CD8-positive, alpha-beta memory T cell (primary cell): ENCODE measurements at regions of chr7 and their contacts with region 1.

Region 1: DNA sequence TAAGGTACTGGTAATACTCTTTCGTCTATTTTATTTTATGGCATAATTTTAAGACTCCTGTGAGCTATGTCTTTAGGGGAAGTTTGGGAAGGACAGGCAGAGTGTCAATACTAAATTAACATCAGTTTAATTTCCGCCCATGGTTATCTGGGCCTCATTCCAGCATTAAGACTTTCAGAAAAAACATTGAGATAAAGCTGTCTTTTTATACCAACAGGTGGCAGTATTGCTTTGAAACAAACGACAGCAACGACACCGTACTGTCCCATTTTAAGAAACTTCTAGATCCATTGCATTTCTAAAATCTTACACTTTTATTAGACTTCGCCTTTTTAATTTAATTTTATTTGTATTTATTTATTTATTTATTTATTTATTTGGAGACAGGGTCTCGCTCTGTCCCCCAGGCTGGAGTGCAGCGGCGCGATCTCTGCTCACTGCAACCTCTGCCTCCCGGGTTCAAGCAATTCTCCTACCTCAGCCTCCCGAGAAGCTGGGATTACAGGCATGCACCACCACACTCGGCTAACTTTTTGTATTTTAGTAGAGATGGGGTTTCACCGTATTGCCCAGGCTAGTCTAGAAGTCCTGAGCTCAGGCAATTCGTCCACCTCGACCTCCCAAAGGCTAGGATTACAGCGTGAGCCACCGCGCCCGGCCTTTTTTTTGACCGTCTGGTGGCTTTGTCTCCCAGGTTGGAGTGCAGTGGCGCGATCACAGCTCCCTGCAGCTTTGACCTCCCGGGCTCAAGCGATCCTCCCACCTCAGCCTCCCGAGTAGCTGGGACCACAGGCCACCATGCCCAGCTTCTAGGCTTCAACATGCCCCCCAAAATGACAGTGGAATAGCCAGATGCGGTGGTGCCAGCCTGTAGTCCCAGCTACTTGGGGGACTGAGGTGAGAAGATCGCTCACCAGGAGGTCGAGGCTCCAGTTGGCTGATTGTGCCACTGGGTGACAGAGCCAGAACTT is 78.7 kb upstream of the C1GALT1 start:
- DNase-seq: peak in 2 of 5 donors; percentile 48 to 58
- H3K4me3 ChIP-seq: no peak overlapping the region
- H3K4me3 Mint-ChIP-seq: no peak overlapping the region
- H3K27ac ChIP-seq: peak overlapping the region; percentile 47
- H3K27ac Mint-ChIP-seq: peak overlapping the region in 2 of 8 donors; percentile 27 to 29
- H3K4me1 ChIP-seq: peaks cover 11% of the 10 kb centered on the region
- H3K4me1 Mint-ChIP-seq: peaks cover 5 to 21% (median 19%) of the 10 kb centered on the region in 3 donors
- H3K27me3 ChIP-seq: no peaks in the 10 kb centered on the region
- H3K27me3 Mint-ChIP-seq: no peaks in the 10 kb centered on the region

Region 2: DNA sequence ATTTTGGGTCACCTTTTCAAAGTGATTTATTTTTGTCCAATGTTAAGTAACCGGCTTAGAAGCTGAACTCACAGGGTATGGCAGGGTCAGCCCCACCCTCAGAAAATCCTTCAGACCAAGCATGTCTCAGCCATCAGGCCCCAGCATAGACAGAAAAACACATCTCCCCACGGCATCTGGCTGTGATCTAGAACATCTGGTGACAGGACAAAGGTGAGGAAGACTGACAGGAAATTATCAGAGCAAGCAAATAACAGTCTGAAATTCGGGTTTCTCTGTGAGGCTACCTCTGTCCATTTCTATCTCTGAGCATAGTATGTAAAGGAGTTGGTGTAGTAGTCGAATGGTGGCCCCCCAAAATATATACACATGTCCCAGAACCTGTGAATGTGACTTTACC is 98.3 kb before region 1 on chr7:
- CTCF ChIA-PET with region 1: no interaction called
- POLR2A ChIA-PET with region 1: no interaction called
- DNase-seq: no peak
- H3K4me3 ChIP-seq: no peak overlapping the region
- H3K4me3 Mint-ChIP-seq: no peak overlapping the region
- H3K27ac ChIP-seq: no peak overlapping the region
- H3K27ac Mint-ChIP-seq: no peak overlapping the region
- H3K4me1 ChIP-seq: no peaks in the 10 kb centered on the region
- H3K4me1 Mint-ChIP-seq: no peaks in the 10 kb centered on the region
- H3K27me3 ChIP-seq: no peaks in the 10 kb centered on the region
- H3K27me3 Mint-ChIP-seq: peaks cover 22 to 46% of the 10 kb centered on the region in 2 donors

Region 3: GRCh38 chr7:7032210-7032609 is 71.4 kb before region 1 on chr7:
- CTCF ChIA-PET with region 1: no interaction called
- POLR2A ChIA-PET with region 1: no interaction called
- DNase-seq: no peak
- H3K4me3 ChIP-seq: no peak overlapping the region
- H3K4me3 Mint-ChIP-seq: no peak overlapping the region
- H3K27ac ChIP-seq: no peak overlapping the region
- H3K27ac Mint-ChIP-seq: no peak overlapping the region
- H3K4me1 ChIP-seq: no peaks in the 10 kb centered on the region
- H3K4me1 Mint-ChIP-seq: no peaks in the 10 kb centered on the region
- H3K27me3 ChIP-seq: no peaks in the 10 kb centered on the region
- H3K27me3 Mint-ChIP-seq: peaks cover 26 to 82% of the 10 kb centered on the region in 2 donors

Region 4: GRCh38 chr7:7542251-7542835 is 438.7 kb after region 1 on chr7:
- CTCF ChIA-PET with region 1: interaction called, 10 read pairs
- POLR2A ChIA-PET with region 1: no interaction called
- DNase-seq: no peak
- H3K4me3 ChIP-seq: no peak overlapping the region
- H3K4me3 Mint-ChIP-seq: no peak overlapping the region
- H3K27ac ChIP-seq: no peak overlapping the region
- H3K27ac Mint-ChIP-seq: no peak overlapping the region
- H3K4me1 ChIP-seq: no peaks in the 10 kb centered on the region
- H3K4me1 Mint-ChIP-seq: peaks cover 0 to 5% (median 0%) of the 10 kb centered on the region in 3 donors
- H3K27me3 ChIP-seq: no peaks in the 10 kb centered on the region
- H3K27me3 Mint-ChIP-seq: peaks cover 0 to 14% of the 10 kb centered on the region in 2 donors